Activated naive CD8-positive, alpha-beta T cell treated with anti-CD3 and anti-CD28 coated beads, Interleukin-2, amount 10 ng/mL, durations not matched to agents 7 days and 5 days (primary cell): ENCODE measurements at regions of chr13 and their contacts with region 1.

Region 1: GRCh38 chr13:21297914-21298831 is 121.7 kb downstream of the MRPL57 start:
- DNase-seq: peak; percentile 90
- ATAC-seq: peak; percentile 91
- H3K4me3 Mint-ChIP-seq: peak overlapping the region; percentile 90
- H3K27ac Mint-ChIP-seq: peak overlapping the region; percentile 42
- H3K4me1 Mint-ChIP-seq: peaks cover 21% of the 10 kb centered on the region
- H3K27me3 Mint-ChIP-seq: no peaks in the 10 kb centered on the region

Region 2: GRCh38 chr13:21287331-21287907 is 10.8 kb before region 1 on chr13:
- POLR2A ChIA-PET with region 1: no interaction called
- DNase-seq: no peak
- ATAC-seq: no peak
- H3K4me3 Mint-ChIP-seq: no peak overlapping the region
- H3K27ac Mint-ChIP-seq: no peak overlapping the region
- H3K4me1 Mint-ChIP-seq: no peaks in the 10 kb centered on the region
- H3K27me3 Mint-ChIP-seq: peaks cover 11% of the 10 kb centered on the region

Region 3: GRCh38 chr13:21336609-21337349 is 38.6 kb after region 1 on chr13:
- POLR2A ChIA-PET with region 1: no interaction called
- DNase-seq: no peak
- ATAC-seq: no peak
- H3K4me3 Mint-ChIP-seq: no peak overlapping the region
- H3K27ac Mint-ChIP-seq: no peak overlapping the region
- H3K4me1 Mint-ChIP-seq: no peaks in the 10 kb centered on the region
- H3K27me3 Mint-ChIP-seq: no peaks in the 10 kb centered on the region

Region 4: DNA sequence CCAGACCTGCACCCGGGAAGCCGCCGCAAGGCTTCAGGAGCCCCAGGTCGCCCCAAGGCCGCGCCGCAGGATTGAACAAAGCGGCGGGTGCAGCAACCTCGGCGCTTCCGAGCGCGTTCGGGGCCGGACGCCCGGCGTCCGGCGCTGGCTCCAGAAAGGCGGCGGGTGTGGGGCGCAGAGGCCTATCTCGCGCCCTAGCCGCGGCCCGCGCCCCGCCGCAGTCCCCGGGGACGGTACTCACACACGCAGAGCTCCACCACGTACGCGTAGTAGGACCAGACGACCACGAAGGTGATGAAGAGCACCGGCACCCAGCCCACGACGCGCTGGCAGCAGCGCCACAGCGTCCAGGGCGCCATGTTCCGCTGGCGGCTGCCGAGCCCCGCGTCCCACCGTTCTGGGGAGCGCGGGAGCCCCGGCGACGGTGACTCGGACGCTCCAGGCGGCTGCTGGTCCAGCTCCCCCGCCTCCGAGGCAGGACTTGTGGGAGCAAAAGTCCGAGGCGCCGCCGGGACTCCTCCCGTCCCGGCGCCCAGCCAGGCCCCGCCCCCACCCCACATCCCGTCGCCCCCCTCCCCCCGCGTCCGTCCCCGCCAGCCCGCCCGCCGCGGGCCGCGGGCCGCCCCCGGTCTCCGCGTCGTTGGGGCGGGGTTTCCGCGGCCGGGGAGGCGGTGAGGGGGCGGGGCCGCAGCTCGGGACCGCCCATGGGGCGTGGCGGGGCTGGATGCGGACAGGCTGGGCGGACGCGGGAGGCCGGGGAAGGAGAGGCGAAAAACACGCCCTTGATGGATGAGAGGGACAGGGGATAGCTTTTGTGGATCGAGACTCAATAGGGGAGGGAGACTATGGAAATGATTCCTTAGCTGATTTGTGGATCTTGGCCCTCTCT is 160.9 kb after region 1 on chr13 and contains the start of gene ZDHHC20:
- POLR2A ChIA-PET with region 1: interaction called, 12 read pairs
- DNase-seq: peak; percentile 98
- ATAC-seq: peak; percentile 80
- H3K4me3 Mint-ChIP-seq: peak within 1 kb of the TSS; percentile 95
- H3K27ac Mint-ChIP-seq: peak within 1 kb of the TSS; percentile 96
- H3K4me1 Mint-ChIP-seq: peaks cover 25% of the 10 kb centered on the region
- H3K27me3 Mint-ChIP-seq: no peaks in the 10 kb centered on the region
- total RNA-seq, gene ZDHHC20: 78.9 to 99.9 TPM

Region 5: GRCh38 chr13:21476893-21477472 is 178.8 kb after region 1 on chr13:
- POLR2A ChIA-PET with region 1: interaction called, 13 read pairs
- DNase-seq: peak; percentile 79
- ATAC-seq: peak; percentile 85
- H3K4me3 Mint-ChIP-seq: peak overlapping the region; percentile 78
- H3K27ac Mint-ChIP-seq: peak overlapping the region; percentile 49
- H3K4me1 Mint-ChIP-seq: peaks cover 10% of the 10 kb centered on the region
- H3K27me3 Mint-ChIP-seq: peaks cover 6% of the 10 kb centered on the region